ENCODE measurements at regions of chr16 and their contacts with region 1.

Region 1: DNA sequence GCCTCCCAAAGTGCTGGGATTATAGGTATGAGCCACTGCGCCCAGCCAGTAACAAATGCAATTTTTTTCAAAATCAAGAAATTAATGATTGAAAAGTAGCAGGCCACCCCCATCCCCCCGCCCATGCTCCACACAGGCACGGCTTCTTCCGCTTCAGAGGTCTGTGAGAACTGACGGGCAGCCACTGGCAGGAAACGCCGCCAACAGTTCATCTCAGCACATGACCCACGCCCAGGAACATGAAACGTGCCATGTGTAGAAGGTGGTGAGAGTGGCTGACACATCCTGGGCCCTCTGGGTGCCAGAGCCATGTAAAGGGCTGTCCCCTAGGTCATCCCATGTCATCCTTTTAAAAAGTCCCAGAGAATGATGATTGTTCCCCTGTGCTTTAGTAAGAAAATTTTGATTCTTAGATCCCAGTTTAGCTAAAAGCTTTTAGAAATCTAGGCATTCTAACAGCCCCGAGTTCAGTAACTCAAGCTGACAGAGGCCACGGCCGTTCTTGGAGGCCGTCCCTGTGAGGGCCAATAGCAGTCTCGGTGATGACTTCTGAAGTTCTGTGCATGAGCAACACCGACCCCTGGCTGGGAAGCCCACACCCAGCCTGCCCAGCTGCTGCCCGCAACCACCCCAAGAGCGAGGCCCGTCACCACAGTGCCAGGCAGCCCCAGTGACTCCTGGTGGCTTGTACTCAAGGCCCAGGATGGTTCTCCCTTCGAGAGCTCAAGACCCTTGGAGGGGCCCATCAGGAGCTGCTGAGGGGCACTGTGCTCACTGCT is 52.1 kb downstream of the KLHDC4 start:
- DNase-seq: peak; percentile 33
- H3K4me3 Mint-ChIP-seq: no peak overlapping the region
- H3K27ac Mint-ChIP-seq: no peak overlapping the region
- H3K4me1 Mint-ChIP-seq: peaks cover 4% of the 10 kb centered on the region
- H3K27me3 Mint-ChIP-seq: no peaks in the 10 kb centered on the region

Region 2: DNA sequence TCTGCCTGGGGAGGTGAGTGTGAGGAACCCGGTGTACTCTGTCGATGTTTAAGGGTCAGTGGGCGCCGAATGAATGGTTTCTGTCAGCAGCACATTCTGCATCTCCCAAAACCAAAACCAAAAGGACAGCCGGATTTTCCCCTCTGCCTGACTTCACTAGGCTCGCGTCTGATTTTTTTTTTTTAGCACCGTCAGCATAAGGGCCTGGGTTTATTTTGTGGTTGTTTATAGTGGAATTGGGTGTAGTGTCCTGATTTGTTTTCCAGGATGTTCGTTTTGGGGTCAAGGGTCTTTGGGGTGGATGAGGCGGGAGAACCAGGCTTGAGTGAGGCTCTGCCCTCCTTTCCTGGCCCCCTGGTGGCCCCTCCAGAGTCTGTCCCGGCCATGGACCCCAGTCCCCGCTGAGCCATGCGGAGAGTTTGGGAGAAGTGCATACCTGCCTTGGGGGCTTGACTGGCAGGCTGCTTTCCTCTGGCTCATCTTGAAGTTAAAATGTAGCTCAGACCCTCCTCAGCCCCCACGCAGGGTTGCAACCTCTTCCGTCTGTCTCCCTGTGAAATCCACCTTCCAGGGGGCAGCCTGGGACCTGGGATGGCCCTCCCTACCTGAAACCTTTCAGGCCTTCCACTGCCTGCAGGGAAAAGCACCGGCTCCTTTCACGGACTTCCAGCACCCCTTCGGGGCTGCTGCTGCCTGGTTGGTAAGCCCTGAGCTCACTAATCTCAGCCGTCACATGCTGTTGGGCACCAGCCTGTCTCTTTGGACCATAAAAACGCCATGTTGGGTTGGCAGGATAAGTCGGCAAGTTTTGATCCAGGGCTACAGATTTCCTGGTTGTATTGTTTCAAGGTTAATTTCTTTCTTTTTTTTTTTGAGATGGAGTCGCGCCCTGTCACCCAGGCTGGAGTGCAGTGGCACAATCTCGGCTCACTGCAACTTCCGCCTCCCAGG is 51.1 kb before region 1 on chr16:
- intact Hi-C with region 1: loop called (anchors 2 kb)
- DNase-seq: no peak
- H3K4me3 Mint-ChIP-seq: no peak overlapping the region
- H3K27ac Mint-ChIP-seq: no peak overlapping the region
- H3K4me1 Mint-ChIP-seq: no peaks in the 10 kb centered on the region
- H3K27me3 Mint-ChIP-seq: no peaks in the 10 kb centered on the region

Region 3: GRCh38 chr16:87790278-87791032 is 76.8 kb after region 1 on chr16:
- intact Hi-C with region 1: no loop called
- DNase-seq: no peak
- H3K4me3 Mint-ChIP-seq: no peak overlapping the region
- H3K27ac Mint-ChIP-seq: no peak overlapping the region
- H3K4me1 Mint-ChIP-seq: no peaks in the 10 kb centered on the region
- H3K27me3 Mint-ChIP-seq: no peaks in the 10 kb centered on the region

Region 4: GRCh38 chr16:88005181-88005581 is 291.5 kb after region 1 on chr16:
- intact Hi-C with region 1: no loop called
- DNase-seq: no peak
- H3K4me3 Mint-ChIP-seq: no peak overlapping the region
- H3K27ac Mint-ChIP-seq: no peak overlapping the region
- H3K4me1 Mint-ChIP-seq: no peaks in the 10 kb centered on the region
- H3K27me3 Mint-ChIP-seq: no peaks in the 10 kb centered on the region